A549 (cell line): ENCODE measurements at regions of chr3 and their contacts with region 1.

Region 1: GRCh38 chr3:8663177-8664061 is 18.8 kb upstream of the SSUH2 start:
- DNase-seq: peak; percentile 79 to 82
- ATAC-seq: peak; percentile 67 to 88
- H3K4me3 ChIP-seq: no peak overlapping the region
- H3K27ac ChIP-seq: peak overlapping the region; percentile 8 to 61; a peak in 3 of 6 replicates
- H3K4me1 ChIP-seq: peaks cover 25% of the 10 kb centered on the region
- CTCF ChIP-seq: peak; percentile 66
- EP300 ChIP-seq: no peak
- POLR2A ChIP-seq: no peak
- RAD21 ChIP-seq: peak; percentile 69 to 73

Region 2: GRCh38 chr3:8416965-8417364 is 246.5 kb before region 1 on chr3:
- CTCF ChIA-PET with region 1: no interaction called
- POLR2A ChIA-PET with region 1: no interaction called
- DNase-seq: peak in 1 of 2 experiments; percentile 7
- ATAC-seq: peak; percentile 30 to 72; a peak in 3 of 6 replicates
- H3K4me3 ChIP-seq: no peak overlapping the region
- H3K27ac ChIP-seq: no peak overlapping the region
- H3K4me1 ChIP-seq: no peaks in the 10 kb centered on the region
- CTCF ChIP-seq: no peak
- EP300 ChIP-seq: no peak
- POLR2A ChIP-seq: no peak
- RAD21 ChIP-seq: no peak

Region 3: DNA sequence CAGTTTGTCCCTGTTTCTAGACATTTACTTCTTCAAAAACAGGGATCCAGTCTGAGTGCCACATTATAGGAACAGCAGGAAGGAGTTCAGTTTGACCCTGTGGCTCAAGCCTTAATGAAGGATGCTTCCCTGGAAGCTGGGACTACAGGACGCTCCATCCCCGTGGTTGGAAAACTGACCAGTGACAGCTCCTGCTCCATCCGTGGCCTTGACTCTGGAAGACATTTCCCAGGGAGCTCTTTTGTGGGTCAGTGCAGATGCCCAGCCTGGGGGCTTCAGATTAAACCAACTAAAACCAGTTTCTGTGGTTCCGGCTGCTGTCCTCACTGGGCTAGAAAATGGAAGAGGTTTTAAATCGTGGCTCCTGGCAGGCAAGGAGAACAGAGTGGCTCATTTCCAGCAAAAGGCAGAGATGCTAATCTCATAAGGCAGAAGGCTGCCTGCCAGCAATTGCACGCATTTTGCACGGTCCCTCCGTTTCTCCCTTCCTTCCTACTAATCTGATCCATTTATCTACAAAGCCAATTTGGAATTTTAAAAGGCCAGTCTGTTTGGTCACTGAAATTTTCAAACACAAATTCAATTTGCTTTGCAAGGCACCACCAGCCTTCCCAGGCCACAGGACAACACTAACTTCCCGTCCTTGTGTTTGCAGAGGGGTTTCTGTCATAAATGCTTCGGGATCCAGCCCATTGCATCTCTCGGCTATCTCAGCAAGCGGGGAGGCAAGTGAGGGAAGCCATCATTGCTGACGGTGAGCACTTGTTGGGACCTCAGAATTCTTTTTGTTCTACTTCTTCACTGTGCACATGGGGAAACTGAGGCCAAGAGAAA is 12.6 kb before region 1 on chr3:
- CTCF ChIA-PET with region 1: interaction called, 12 read pairs
- POLR2A ChIA-PET with region 1: no interaction called
- DNase-seq: no peak
- ATAC-seq: no peak
- H3K4me3 ChIP-seq: no peak overlapping the region
- H3K27ac ChIP-seq: no peak overlapping the region
- H3K4me1 ChIP-seq: no peaks in the 10 kb centered on the region
- CTCF ChIP-seq: no peak
- EP300 ChIP-seq: no peak
- POLR2A ChIP-seq: no peak
- RAD21 ChIP-seq: no peak

Region 4: DNA sequence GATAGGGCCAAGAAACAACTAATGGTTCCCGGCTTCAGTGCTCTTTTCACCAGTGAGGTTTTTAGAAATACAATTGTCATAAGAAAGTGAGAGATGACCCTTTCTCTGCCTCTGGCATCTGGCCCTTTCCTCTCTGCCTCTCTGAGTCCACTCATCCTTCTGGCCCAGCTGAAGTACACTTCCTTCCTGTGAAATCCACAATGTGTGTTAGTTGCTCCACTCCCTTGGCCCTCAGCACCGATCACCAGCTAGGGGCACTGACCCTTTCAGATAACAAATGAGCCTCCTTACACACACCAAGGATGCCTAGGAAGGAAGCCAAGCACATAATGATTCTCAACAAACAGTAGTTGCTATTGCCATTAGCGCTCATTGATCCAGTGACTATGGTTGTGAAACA is 67.2 kb after region 1 on chr3:
- CTCF ChIA-PET with region 1: no interaction called
- POLR2A ChIA-PET with region 1: no interaction called
- DNase-seq: no peak
- ATAC-seq: no peak
- H3K4me3 ChIP-seq: no peak overlapping the region
- H3K27ac ChIP-seq: no peak overlapping the region
- H3K4me1 ChIP-seq: no peaks in the 10 kb centered on the region
- CTCF ChIP-seq: no peak
- EP300 ChIP-seq: no peak
- POLR2A ChIP-seq: no peak
- RAD21 ChIP-seq: no peak

Region 5: GRCh38 chr3:8793242-8793641 is 129.8 kb after region 1 on chr3:
- CTCF ChIA-PET with region 1: no interaction called
- POLR2A ChIA-PET with region 1: no interaction called
- DNase-seq: peak; percentile 68 to 73
- ATAC-seq: peak; percentile 92 to 98
- H3K4me3 ChIP-seq: no peak overlapping the region
- H3K27ac ChIP-seq: peak overlapping the region; percentile 50 to 65
- H3K4me1 ChIP-seq: peaks cover 17% of the 10 kb centered on the region
- CTCF ChIP-seq: no peak
- EP300 ChIP-seq: no peak
- POLR2A ChIP-seq: no peak
- RAD21 ChIP-seq: 0 out of 5 replicates have a peak, but pooled peaks of 1 of the 2 experiments have one; percentile 12